Heart right ventricle (tissue), 16 donors: ENCODE measurements at regions of chr2 and their contacts with region 1.

Region 1: GRCh38 chr2:158006961-158007719 is 94.5 kb upstream of the UPP2 start:
- DNase-seq: no peak
- ATAC-seq: peak in 1 of 8 donors; percentile 74
- H3K4me3 ChIP-seq: no peak overlapping the region
- H3K27ac ChIP-seq: no peak overlapping the region
- H3K4me1 ChIP-seq: peaks cover 0 to 10% (median 3%) of the 10 kb centered on the region in 9 donors
- H3K27me3 ChIP-seq: no peaks in the 10 kb centered on the region
- CTCF ChIP-seq: peak in 1 of 9 donors; percentile 22

Region 2: GRCh38 chr2:157302492-157303099 is 704.5 kb before region 1 on chr2:
- intact Hi-C with region 1: loop called in 5 of 10 experiments (anchors 5 to 10 kb)
- DNase-seq: peak in 1 of 2 donors; percentile 8
- ATAC-seq: peak in 4 of 8 donors; percentile 53 to 78 (median 62)
- H3K4me3 ChIP-seq: no peak overlapping the region
- H3K27ac ChIP-seq: no peak overlapping the region
- H3K4me1 ChIP-seq: peaks cover 0 to 4% (median 0%) of the 10 kb centered on the region in 9 donors
- H3K27me3 ChIP-seq: peaks cover 0 to 18% (median 9%) of the 10 kb centered on the region in 7 donors
- CTCF ChIP-seq: peak; percentile 56 to 85 (median 79)

Region 3: GRCh38 chr2:157492189-157492773 is 514.9 kb before region 1 on chr2:
- intact Hi-C with region 1: loop called in 7 of 10 experiments (anchors 2 to 5 kb)
- DNase-seq: peak; percentile 27 to 60
- ATAC-seq: peak in 7 of 8 donors; percentile 70 to 84 (median 74)
- H3K4me3 ChIP-seq: no peak overlapping the region
- H3K27ac ChIP-seq: no peak overlapping the region
- H3K4me1 ChIP-seq: no peaks in the 10 kb centered on the region
- H3K27me3 ChIP-seq: peaks cover 0 to 11% (median 0%) of the 10 kb centered on the region in 7 donors
- CTCF ChIP-seq: peak; percentile 45 to 78 (median 72)

Region 4: GRCh38 chr2:157777427-157777826 is 229.7 kb before region 1 on chr2:
- intact Hi-C with region 1: loop called (anchors 1 to 5 kb)
- DNase-seq: peak in 1 of 2 donors; percentile 44
- ATAC-seq: peak in 1 of 8 donors; percentile 44
- H3K4me3 ChIP-seq: no peak overlapping the region
- H3K27ac ChIP-seq: no peak overlapping the region
- H3K4me1 ChIP-seq: peaks cover 5 to 16% (median 11%) of the 10 kb centered on the region in 9 donors
- H3K27me3 ChIP-seq: no peaks in the 10 kb centered on the region
- CTCF ChIP-seq: peak; percentile 47 to 85 (median 72)

Region 5: DNA sequence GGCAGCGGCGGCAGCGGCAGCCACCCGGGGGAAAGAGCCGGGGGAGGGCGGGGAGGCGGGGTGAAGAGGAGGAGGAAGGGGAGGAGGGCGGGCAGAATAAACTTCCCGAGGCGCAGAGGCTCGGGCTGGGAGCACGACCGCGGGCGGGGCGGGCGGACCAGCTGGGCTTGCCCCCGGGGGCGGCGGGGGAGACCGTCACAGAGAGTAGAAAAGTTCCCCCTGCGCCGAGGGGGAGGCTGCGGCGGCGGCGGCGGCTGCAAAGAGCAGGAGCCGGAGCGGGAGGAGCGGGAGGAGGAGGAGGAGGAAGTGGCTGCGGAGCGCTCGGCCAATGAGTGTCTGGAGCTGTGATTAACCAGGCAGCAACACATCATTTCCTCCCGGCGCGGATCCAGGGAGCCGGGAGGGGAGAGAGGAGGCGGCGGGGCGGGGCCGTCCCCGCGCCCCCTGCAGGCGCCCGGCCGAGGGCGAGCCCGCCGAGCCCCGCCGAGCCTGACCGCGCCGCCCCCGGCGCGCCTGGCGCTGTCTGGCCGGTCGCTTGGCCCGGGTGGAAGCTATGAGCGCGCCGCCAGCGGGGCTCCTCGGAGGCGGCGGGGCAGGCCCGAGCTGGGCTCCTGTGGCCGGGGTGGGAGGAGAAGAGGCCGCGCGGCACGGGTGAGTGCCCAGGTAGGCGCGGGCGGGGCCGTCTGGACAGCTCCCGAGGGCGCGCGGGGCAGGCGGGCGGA is 130.9 kb before region 1 on chr2 and contains the start of gene ACVR1:
- intact Hi-C with region 1: loop called in 2 of 10 experiments (anchors 5 to 10 kb)
- DNase-seq: peak; percentile 95 to 97
- ATAC-seq: peak; percentile 94 to 98 (median 97)
- H3K4me3 ChIP-seq: peak within 1 kb of the TSS; percentile 51 to 92 (median 85)
- H3K27ac ChIP-seq: peak within 1 kb of the TSS; percentile 89 to 98 (median 96)
- H3K4me1 ChIP-seq: peaks cover 2 to 47% (median 25%) of the 10 kb centered on the region in 9 donors
- H3K27me3 ChIP-seq: no peaks in the 10 kb centered on the region
- CTCF ChIP-seq: peak in 8 of 9 donors; percentile 28 to 63 (median 47)
- total RNA-seq, gene ACVR1: 15.6 to 32.7 (median 23.0) TPM

Region 6: GRCh38 chr2:158337018-158337417 is 329.9 kb after region 1 on chr2:
- intact Hi-C with region 1: no loop called
- DNase-seq: no peak
- ATAC-seq: no peak
- H3K4me3 ChIP-seq: no peak overlapping the region
- H3K27ac ChIP-seq: no peak overlapping the region
- H3K4me1 ChIP-seq: no peaks in the 10 kb centered on the region
- H3K27me3 ChIP-seq: no peaks in the 10 kb centered on the region
- CTCF ChIP-seq: no peak